H1 (cell line): ENCODE measurements at regions of chr17 and their contacts with region 1.

Region 1: DNA sequence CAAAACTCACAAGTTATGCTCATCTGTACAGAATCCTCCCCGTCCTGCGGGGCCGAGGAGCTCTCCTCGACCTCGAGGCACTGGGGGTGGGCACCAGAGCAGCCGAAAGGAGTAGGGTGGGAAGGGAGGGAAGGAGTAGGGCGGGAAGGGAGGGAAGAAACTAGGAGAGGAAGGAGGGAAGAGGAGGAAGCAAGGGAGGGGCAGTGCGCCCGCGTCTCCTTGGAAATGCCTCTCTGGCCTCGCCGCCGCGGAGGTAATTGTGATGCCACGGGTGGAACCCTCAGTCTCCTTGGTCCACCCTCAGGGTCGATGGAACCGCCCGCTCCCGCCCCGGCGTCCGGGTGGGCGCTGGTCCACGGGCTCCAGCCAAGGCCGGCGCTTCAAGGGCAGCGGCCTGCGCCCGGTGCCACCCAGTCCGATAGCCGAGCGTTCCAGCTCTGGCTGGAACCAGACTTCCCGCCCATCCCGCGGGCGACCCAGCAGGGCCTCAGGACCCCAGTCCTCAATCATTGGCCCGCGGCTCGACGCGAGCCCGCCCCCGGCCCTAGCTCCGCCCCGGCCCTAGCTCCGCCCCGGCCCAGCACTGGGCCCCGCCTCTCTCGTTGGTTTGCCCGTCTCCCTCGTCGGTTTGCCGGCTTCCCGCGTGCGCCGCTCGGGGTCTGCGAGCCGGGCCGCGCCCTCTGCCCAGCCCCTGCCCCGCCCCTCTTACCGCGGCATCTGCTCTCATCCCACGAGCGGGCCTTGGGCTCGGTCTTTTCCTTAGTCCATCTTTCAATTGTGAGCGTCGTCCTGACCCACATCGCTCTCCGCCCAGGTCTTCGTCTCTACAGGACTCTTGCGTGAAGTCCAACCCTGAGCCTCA is 596 bp downstream of the PROCA1 start:
- DNase-seq: peak; percentile 83 to 96
- H3K4me3 ChIP-seq: peak overlapping the region; percentile 59 to 85 (median 82)
- H3K27ac ChIP-seq: peak overlapping the region; percentile 98
- H3K4me1 ChIP-seq: peaks cover 5 to 17% (median 9%) of the 10 kb centered on the region in 4 experiments; a peak in 6 of 7 replicates
- H3K27me3 ChIP-seq: no peaks in the 10 kb centered on the region
- CTCF ChIP-seq: no peak
- EP300 ChIP-seq: no peak
- POLR2A ChIP-seq: peak; percentile 96 to 99
- RAD21 ChIP-seq: no peak

Region 2: GRCh38 chr17:28661635-28662537 is 49.2 kb before region 1 on chr17 and contains the starts of genes SDF2 and SUPT6H:
- CTCF ChIA-PET with region 1: interaction called, 3 read pairs
- POLR2A ChIA-PET with region 1: interaction called, 19 read pairs
- DNase-seq: peak in 1 of 2 experiments; percentile 98
- H3K4me3 ChIP-seq: peak within 1 kb of the TSS; percentile 85 to 99 (median 96)
- H3K27ac ChIP-seq: peak within 1 kb of the TSS; percentile 92
- H3K4me1 ChIP-seq: peaks cover 0 to 2% (median 0%) of the 10 kb centered on the region in 4 experiments; a peak in 3 of 7 replicates
- H3K27me3 ChIP-seq: no peaks in the 10 kb centered on the region
- CTCF ChIP-seq: no peak
- EP300 ChIP-seq: no peak
- POLR2A ChIP-seq: peak; percentile 75 to 76; a peak in 2 of 3 replicates
- RAD21 ChIP-seq: no peak
- total RNA-seq, gene SDF2: 43.6 and 44.8 TPM in 2 replicates
- total RNA-seq, gene SUPT6H: 59.9 and 62.4 TPM in 2 replicates

Region 3: GRCh38 chr17:28693869-28694268 is 17.2 kb before region 1 on chr17:
- CTCF ChIA-PET with region 1: interaction called, 3 read pairs
- POLR2A ChIA-PET with region 1: interaction called, 25 read pairs
- DNase-seq: no peak
- H3K4me3 ChIP-seq: no peak overlapping the region
- H3K27ac ChIP-seq: no peak overlapping the region
- H3K4me1 ChIP-seq: no peaks in the 10 kb centered on the region
- H3K27me3 ChIP-seq: no peaks in the 10 kb centered on the region
- CTCF ChIP-seq: no peak
- EP300 ChIP-seq: no peak
- POLR2A ChIP-seq: no peak
- RAD21 ChIP-seq: no peak

Region 4: DNA sequence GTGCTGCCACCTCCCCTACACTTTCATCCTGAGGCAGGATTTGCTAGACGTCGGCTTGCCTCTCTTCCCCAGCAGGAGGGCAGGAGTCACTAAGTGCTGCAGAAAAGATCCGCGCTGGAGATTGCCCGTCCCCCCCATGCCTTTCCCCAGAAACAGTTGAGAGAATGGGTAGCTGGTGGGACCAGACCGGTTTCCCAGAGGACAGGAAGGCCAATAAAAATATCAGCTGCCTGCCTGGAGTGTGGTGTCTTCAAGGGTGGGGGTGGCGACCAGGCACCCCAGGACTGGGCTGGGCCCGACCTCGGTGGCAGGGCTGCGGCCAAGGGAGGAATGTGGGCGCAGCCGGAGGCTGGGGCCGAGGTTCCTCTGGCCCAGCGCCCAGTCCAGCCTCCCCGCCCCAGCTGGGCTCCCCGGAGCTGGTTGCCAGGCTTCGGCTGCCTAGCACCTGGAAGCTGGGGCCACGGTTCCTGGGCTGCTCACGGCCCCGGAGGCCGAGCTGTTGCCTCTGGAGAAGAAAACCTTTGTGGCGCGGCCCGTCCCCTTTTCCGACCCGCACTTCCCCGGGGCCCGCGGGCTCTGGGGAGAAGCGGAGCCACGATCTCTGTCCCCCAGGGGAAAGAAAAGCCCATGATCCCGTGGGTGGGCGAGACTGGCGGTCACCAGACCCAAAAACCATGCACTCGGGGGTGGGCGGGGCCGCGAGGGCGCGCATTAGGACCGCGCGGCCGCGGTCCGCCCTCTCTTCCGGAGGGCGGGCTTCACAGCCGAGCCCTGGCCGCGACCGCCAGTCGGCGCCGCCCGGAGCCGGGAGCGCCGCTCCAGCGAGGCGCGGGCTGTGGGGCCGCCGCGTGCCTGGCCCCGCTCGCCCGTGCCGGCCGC is 32.4 kb after region 1 on chr17 and contains the start of gene TRAF4:
- CTCF ChIA-PET with region 1: interaction called, 4 read pairs
- POLR2A ChIA-PET with region 1: interaction called, 100 read pairs
- DNase-seq: peak in 1 of 2 experiments; percentile 87
- H3K4me3 ChIP-seq: peak within 1 kb of the TSS; percentile 94 to 99 (median 98)
- H3K27ac ChIP-seq: peak within 1 kb of the TSS; percentile 99
- H3K4me1 ChIP-seq: peaks cover 0 to 30% (median 24%) of the 10 kb centered on the region in 4 experiments; a peak in 6 of 7 replicates
- H3K27me3 ChIP-seq: no peaks in the 10 kb centered on the region
- CTCF ChIP-seq: peak in 2 of 3 experiments; percentile 8 to 17; a peak in 2 of 4 replicates
- EP300 ChIP-seq: no peak
- POLR2A ChIP-seq: peak; percentile 84 to 94; a peak in 2 of 3 replicates
- RAD21 ChIP-seq: no peak
- total RNA-seq, gene TRAF4: 167 TPM in 2 replicates

Region 5: DNA sequence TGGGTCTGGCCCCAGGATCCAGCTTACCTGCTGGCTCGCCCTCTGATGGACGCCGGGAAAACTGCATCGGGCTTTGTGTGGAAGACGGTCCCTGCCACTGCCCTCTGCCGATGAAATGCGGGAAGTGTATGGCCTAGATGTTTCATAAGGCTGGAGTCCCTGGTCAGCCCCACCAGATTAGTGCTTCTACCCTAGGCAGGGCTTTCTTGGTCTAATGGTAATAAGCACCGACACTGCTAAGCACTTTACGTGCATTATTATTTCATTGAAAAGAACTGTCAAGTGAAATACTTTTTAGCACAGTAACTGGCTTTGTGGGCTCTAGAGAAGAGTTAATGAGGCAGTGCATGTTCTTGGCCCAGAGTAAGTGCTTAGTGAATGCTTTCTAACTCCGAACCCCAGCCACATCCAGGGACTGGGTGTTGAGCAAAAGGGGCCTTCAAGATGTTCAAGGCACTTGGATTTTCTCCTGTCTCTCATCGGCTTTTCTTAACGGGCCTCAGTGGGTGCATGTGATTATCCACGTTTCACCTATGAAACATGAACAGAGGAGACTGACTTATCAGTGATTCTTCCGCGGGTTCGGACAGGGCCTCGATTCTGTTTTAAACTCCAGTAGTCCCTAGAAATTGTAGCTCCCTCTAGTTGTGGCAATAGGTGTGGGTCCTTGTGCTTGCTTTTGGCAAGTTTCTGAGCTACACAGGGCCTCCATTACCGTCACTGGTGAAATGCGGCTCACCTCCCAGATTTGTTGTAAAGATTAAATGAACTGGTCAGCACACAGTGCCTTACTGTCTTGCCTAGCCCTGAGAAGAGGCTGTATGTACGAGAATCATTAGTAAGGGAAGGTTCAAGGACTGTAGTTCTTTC is 39.3 kb after region 1 on chr17:
- CTCF ChIA-PET with region 1: interaction called, 3 read pairs
- POLR2A ChIA-PET with region 1: interaction called, 100 read pairs
- DNase-seq: peak in 1 of 2 experiments; percentile 96
- H3K4me3 ChIP-seq: no peak overlapping the region
- H3K27ac ChIP-seq: no peak overlapping the region
- H3K4me1 ChIP-seq: peaks cover 0 to 30% (median 24%) of the 10 kb centered on the region in 4 experiments; a peak in 6 of 7 replicates
- H3K27me3 ChIP-seq: no peaks in the 10 kb centered on the region
- CTCF ChIP-seq: peak; percentile 98 to 100 (median 100)
- EP300 ChIP-seq: 0 out of 3 replicates have a peak, but pooled peaks of 1 of the 2 experiments have one; percentile 5
- POLR2A ChIP-seq: peak in 1 of 2 experiments; percentile 73; a peak in 2 of 3 replicates
- RAD21 ChIP-seq: peak; percentile 71 to 81

Region 6: GRCh38 chr17:28818819-28819221 is 107.7 kb after region 1 on chr17:
- CTCF ChIA-PET with region 1: no interaction called
- POLR2A ChIA-PET with region 1: no interaction called
- DNase-seq: no peak
- H3K4me3 ChIP-seq: no peak overlapping the region
- H3K27ac ChIP-seq: no peak overlapping the region
- H3K4me1 ChIP-seq: no peaks in the 10 kb centered on the region; a peak in 1 of 7 replicates
- H3K27me3 ChIP-seq: no peaks in the 10 kb centered on the region
- CTCF ChIP-seq: no peak
- EP300 ChIP-seq: no peak
- POLR2A ChIP-seq: no peak
- RAD21 ChIP-seq: no peak

Region 7: DNA sequence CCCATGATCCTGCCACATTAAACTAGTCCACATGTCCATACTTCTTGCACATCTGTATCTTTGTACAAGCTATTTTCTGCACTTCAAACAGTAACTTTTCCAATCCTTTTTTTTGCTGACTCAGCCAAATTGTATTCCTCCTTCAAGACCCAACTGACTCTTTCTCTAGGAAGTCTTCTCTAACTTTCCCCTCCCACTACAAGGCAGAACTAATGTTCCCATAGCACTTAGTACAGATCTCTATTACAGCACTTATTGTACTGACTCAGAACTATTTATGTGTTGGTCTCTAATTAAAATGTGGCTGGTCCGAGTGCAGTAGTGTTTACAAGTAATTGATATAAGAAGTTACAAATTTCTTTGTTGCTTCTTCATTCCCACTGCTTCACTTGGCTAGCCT is 123.3 kb after region 1 on chr17:
- CTCF ChIA-PET with region 1: no interaction called
- POLR2A ChIA-PET with region 1: no interaction called
- DNase-seq: no peak
- H3K4me3 ChIP-seq: no peak overlapping the region
- H3K27ac ChIP-seq: no peak overlapping the region
- H3K4me1 ChIP-seq: no peaks in the 10 kb centered on the region
- H3K27me3 ChIP-seq: no peaks in the 10 kb centered on the region
- CTCF ChIP-seq: no peak
- EP300 ChIP-seq: no peak
- POLR2A ChIP-seq: no peak
- RAD21 ChIP-seq: no peak